Breast epithelium (tissue), 4 donors: ENCODE measurements at regions of chr7 and their contacts with region 1.

Region 1: GRCh38 chr7:157865351-157866165 is 528.8 kb downstream of the DNAJB6 start:
- DNase-seq: no peak
- H3K4me3 ChIP-seq: no peak overlapping the region
- H3K27ac ChIP-seq: no peak overlapping the region
- H3K4me1 ChIP-seq: no peaks in the 10 kb centered on the region
- H3K27me3 ChIP-seq: no peaks in the 10 kb centered on the region
- CTCF ChIP-seq: no peak
- POLR2A ChIP-seq: no peak

Region 2: GRCh38 chr7:157793087-157793353 is 72.5 kb before region 1 on chr7:
- intact Hi-C with region 1: loop called (anchors 2 kb)
- DNase-seq: no peak
- H3K4me3 ChIP-seq: no peak overlapping the region
- H3K27ac ChIP-seq: no peak overlapping the region
- H3K4me1 ChIP-seq: no peaks in the 10 kb centered on the region
- H3K27me3 ChIP-seq: peaks cover 0 to 17% of the 10 kb centered on the region in 2 donors
- CTCF ChIP-seq: no peak
- POLR2A ChIP-seq: no peak